CD4-positive, alpha-beta memory T cell (primary cell): ENCODE measurements at regions of chr17 and their contacts with region 1.

Region 1: DNA sequence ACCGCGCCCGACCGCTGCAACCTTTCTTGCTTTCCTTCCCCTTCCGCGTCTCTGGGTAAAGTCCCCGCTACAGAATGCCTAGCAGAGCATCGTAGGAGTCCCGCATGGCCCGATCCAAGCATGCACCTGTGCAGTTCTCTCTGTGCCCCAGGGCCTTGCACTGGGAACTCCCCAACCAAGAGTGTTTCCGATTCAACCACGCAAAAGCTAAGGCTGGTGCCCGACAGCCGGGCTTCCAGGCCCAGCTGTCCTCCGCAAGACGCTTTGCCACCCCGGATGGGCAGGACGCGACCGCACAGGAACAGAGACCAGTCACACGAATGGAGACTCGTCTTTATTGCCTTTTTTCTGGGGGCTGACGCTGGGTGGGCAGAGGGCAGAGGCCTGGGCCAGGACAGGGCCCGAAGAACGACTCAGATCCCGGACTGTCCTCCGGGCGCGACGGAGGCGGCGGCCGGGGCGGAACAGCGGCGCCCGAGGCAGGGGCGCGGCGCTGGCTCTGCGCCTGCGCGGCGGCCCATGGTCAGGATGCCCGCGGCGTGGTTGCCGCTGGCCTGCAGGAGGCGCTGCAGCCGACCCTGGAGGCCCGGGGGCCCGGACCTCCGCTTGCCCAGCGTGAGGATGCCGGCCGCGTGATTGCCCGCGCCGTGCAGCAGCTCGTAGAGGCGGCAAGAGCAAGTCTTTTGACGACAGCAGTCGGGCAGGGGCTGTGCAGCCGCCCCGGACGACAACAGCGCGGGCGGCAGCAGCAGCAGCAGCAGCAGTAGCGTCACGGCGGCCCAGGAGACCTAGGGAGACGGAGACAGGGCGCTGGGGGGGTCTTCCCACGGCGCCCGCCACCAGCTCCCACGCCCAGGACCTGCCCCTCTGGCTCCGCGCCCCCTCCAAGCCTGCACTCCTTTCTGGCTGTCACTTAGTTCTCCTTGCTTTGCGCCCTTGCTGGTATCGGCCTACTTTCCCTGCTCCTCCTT is 1.2 kb downstream of the HCRT start:
- DNase-seq: peak; percentile 74 to 84 (median 75)
- H3K4me3 ChIP-seq: peak overlapping the region; percentile 63 to 86
- H3K4me3 Mint-ChIP-seq: peak overlapping the region; percentile 87 to 96 (median 91)
- H3K27ac ChIP-seq: peak overlapping the region; percentile 72
- H3K27ac Mint-ChIP-seq: peak overlapping the region; percentile 78 to 94 (median 88)
- H3K4me1 ChIP-seq: peaks cover 56% of the 10 kb centered on the region
- H3K4me1 Mint-ChIP-seq: peaks cover 21 to 52% (median 35%) of the 10 kb centered on the region in 4 donors
- H3K27me3 ChIP-seq: no peaks in the 10 kb centered on the region
- H3K27me3 Mint-ChIP-seq: peaks cover 0 to 5% of the 10 kb centered on the region in 2 donors

Region 2: DNA sequence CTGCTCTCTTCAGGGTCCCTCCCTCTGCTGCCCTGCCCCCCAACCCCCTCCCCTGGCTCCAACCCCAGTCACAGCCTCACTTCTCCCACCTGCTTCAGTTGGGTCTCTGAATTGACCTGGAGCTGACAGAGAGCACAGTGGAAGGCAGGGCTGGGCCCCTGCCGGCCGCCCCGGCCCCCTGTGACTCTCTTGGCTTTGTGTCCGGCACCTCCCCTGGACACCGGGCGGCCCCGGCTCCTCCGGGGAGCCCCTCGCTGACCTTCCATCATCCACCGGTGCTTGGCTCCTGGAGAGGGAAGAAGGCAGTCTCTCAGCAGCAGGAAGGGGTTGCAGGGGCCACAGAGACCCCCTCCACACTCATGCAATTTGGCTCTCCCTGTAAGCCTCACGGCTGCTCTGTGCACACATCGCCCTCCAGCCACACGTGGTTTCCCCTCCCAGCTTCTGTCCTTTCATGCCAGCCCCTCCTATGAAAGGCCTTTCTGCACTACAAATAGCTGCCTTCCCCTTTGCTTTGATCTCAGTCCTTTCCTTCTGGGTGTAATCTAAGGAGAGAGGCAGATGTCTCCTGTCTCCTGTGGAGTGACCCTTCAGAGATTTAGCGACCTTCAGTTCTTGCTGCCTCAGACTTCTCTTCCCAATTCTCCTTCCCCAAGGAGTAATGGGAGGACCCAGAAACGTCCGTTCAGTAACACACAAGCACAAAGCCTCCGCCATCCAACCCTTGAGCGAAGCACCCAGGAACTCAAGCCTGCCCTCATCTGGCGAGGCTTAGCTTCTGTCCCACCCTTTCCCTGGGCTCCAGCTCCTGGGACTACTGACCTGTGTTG is 155.8 kb before region 1 on chr17:
- CTCF ChIA-PET with region 1: interaction called, 4 read pairs
- POLR2A ChIA-PET with region 1: no interaction called
- intact Hi-C with region 1: loop called (anchors 5 kb)
- DNase-seq: no peak
- H3K4me3 ChIP-seq: no peak overlapping the region
- H3K4me3 Mint-ChIP-seq: no peak overlapping the region
- H3K27ac ChIP-seq: no peak overlapping the region
- H3K27ac Mint-ChIP-seq: no peak overlapping the region
- H3K4me1 ChIP-seq: peaks cover 6% of the 10 kb centered on the region
- H3K4me1 Mint-ChIP-seq: peaks cover 3 to 6% (median 5%) of the 10 kb centered on the region in 4 donors
- H3K27me3 ChIP-seq: no peaks in the 10 kb centered on the region
- H3K27me3 Mint-ChIP-seq: peaks cover 2 to 3% of the 10 kb centered on the region in 2 donors

Region 3: GRCh38 chr17:42142371-42142896 is 41.6 kb before region 1 on chr17:
- CTCF ChIA-PET with region 1: no interaction called
- POLR2A ChIA-PET with region 1: no interaction called
- intact Hi-C with region 1: no loop called
- DNase-seq: no peak
- H3K4me3 ChIP-seq: no peak overlapping the region
- H3K4me3 Mint-ChIP-seq: peak overlapping the region in 1 of 8 donors; percentile 31
- H3K27ac ChIP-seq: no peak overlapping the region
- H3K27ac Mint-ChIP-seq: peak overlapping the region in 2 of 7 donors; percentile 5 to 68
- H3K4me1 ChIP-seq: peaks cover 18% of the 10 kb centered on the region
- H3K4me1 Mint-ChIP-seq: peaks cover 26 to 67% (median 43%) of the 10 kb centered on the region in 4 donors
- H3K27me3 ChIP-seq: no peaks in the 10 kb centered on the region
- H3K27me3 Mint-ChIP-seq: no peaks in the 10 kb centered on the region

Region 4: GRCh38 chr17:42153919-42154742 is 29.9 kb before region 1 on chr17:
- CTCF ChIA-PET with region 1: interaction called, 10 read pairs
- POLR2A ChIA-PET with region 1: interaction called, 4 read pairs
- intact Hi-C with region 1: loop called (anchors 1 kb)
- DNase-seq: no peak
- H3K4me3 ChIP-seq: peak overlapping the region; percentile 86 to 96
- H3K4me3 Mint-ChIP-seq: peak overlapping the region; percentile 89 to 98 (median 94)
- H3K27ac ChIP-seq: peak overlapping the region; percentile 96
- H3K27ac Mint-ChIP-seq: peak overlapping the region; percentile 82 to 98 (median 96)
- H3K4me1 ChIP-seq: peaks cover 42% of the 10 kb centered on the region
- H3K4me1 Mint-ChIP-seq: peaks cover 24 to 49% (median 37%) of the 10 kb centered on the region in 4 donors
- H3K27me3 ChIP-seq: no peaks in the 10 kb centered on the region
- H3K27me3 Mint-ChIP-seq: no peaks in the 10 kb centered on the region

Region 5: GRCh38 chr17:42193969-42194899 is 10.2 kb after region 1 on chr17 and contains the start of gene GHDC:
- CTCF ChIA-PET with region 1: interaction called, 15 read pairs
- POLR2A ChIA-PET with region 1: interaction called, 50 read pairs
- intact Hi-C with region 1: loop called (anchors 1 kb)
- DNase-seq: peak; percentile 75 to 84 (median 76)
- H3K4me3 ChIP-seq: peak within 1 kb of the TSS; percentile 64 to 97
- H3K4me3 Mint-ChIP-seq: peak within 1 kb of the TSS; percentile 82 to 96 (median 93)
- H3K27ac ChIP-seq: peak within 1 kb of the TSS; percentile 70
- H3K27ac Mint-ChIP-seq: peak within 1 kb of the TSS; percentile 60 to 95 (median 89)
- H3K4me1 ChIP-seq: peaks cover 20% of the 10 kb centered on the region
- H3K4me1 Mint-ChIP-seq: peaks cover 15 to 25% (median 20%) of the 10 kb centered on the region in 4 donors
- H3K27me3 ChIP-seq: no peaks in the 10 kb centered on the region
- H3K27me3 Mint-ChIP-seq: no peaks in the 10 kb centered on the region
- total RNA-seq, gene GHDC: 23.9 to 25.3 TPM